GM23248 (cell line): ENCODE measurements at regions of chr15 and their contacts with region 1.

Region 1: DNA sequence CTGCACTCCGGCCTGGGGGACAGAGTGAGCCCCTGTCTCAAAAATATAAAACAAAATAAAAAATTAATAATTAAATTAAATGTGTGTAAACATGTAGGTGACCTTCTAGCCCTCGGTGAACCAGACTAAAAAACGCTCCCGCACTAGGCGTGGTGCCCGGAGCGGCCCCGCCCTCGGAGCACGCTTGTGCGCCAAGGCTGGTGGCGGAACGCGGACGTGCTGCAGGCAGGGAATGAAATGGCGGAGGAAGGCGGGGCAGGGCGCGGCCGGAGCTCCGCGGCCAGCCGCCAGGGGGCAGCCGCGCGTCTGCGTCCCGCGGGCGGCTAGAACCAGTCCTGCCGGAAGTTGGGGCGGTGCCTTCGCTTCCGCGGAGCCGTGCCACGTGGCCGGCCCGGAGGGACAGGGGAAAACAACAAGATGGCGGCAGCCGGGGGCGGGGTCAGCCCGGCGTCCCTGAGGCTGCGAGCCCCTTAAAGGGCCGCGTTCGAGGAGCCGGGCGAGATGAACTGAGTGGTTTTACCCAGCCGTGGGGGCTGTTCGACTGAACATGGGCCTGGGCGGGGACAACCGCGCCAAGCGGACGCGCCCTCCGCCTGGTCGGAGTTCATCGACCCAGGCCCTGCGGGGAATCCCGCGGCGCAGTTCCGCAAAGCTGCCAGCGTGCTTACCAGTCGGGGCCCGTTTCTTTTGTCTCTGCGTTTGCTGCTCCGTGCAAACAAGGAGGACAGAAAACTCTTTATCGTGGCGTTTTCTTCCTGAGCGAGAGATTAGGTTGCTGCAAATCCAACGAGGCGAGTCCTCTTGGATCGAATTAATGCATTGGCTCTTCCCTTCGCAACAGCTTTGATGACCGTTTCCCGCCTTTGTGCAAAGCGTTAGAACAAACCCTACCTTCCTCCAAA is 90.9 kb upstream of the CHD2 start:
- DNase-seq: peak; percentile 99
- H3K4me3 ChIP-seq: peak overlapping the region; percentile 74
- H3K27ac ChIP-seq: peak overlapping the region; percentile 96
- H3K4me1 ChIP-seq: peaks cover 35% of the 10 kb centered on the region
- H3K27me3 ChIP-seq: no peaks in the 10 kb centered on the region

Region 2: DNA sequence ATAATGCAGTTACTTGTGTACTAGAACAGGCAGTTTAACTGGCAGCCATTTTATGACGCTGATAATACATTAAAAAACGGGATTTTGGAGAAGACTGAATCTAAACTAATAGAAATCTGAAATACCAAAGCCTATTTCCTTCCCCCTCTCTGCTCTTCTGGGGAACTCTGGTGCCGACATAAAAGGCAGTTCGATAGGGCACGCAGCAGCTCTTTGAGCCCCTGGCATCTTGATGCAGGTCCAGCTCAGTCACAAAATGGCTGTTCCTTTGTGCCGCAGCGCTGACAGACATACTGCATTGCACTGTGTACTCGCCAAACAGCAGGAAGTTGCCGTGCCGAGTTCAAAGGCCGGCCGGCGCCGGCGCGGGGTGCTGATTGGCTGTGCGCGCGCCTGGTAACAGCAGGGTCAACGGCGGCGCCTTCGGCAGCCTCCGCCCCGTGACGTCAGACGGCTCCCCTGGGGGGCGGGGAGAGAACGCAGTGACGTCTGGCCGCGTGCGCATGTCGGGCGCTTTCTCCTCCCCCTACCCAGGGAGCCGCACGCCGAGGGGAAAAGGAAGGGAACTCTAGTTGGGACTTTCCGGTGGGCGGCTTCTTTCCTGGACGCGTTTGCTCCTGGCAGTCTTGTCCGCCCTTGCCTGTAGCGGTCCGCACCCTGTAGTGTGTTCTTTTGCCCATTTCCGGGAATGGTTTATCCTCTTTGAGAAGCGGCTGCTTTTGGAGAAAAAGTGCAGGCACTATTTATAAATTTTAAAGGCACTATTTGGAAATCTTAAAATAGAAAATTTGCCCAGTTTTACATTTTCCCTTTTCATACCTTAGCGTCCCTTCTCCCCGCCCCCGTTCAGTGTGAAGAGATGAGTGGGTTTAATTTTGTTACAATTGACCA is 95.0 kb after region 1 on chr15:
- in situ Hi-C with region 1: loop called (anchors 10 kb)
- DNase-seq: peak; percentile 99
- H3K4me3 ChIP-seq: peak overlapping the region; percentile 97
- H3K27ac ChIP-seq: peak overlapping the region; percentile 98
- H3K4me1 ChIP-seq: peaks cover 53% of the 10 kb centered on the region
- H3K27me3 ChIP-seq: no peaks in the 10 kb centered on the region